Naive thymus-derived CD8-positive, alpha-beta T cell (primary cell): ENCODE measurements at regions of chr1 and their contacts with region 1.

Region 1: GRCh38 chr1:113940365-113941244 is 11.5 kb downstream of the HIPK1 start:
- DNase-seq: peak in 9 of 10 donors; percentile 13 to 68 (median 62)
- ATAC-seq: peak; percentile 70 to 74
- H3K4me3 Mint-ChIP-seq: peak overlapping the region; percentile 74 to 92 (median 84)
- H3K27ac Mint-ChIP-seq: peak overlapping the region; percentile 91 to 98 (median 96)
- H3K4me1 Mint-ChIP-seq: peaks cover 43 to 86% (median 77%) of the 10 kb centered on the region in 4 donors
- H3K27me3 Mint-ChIP-seq: no peaks in the 10 kb centered on the region

Region 2: DNA sequence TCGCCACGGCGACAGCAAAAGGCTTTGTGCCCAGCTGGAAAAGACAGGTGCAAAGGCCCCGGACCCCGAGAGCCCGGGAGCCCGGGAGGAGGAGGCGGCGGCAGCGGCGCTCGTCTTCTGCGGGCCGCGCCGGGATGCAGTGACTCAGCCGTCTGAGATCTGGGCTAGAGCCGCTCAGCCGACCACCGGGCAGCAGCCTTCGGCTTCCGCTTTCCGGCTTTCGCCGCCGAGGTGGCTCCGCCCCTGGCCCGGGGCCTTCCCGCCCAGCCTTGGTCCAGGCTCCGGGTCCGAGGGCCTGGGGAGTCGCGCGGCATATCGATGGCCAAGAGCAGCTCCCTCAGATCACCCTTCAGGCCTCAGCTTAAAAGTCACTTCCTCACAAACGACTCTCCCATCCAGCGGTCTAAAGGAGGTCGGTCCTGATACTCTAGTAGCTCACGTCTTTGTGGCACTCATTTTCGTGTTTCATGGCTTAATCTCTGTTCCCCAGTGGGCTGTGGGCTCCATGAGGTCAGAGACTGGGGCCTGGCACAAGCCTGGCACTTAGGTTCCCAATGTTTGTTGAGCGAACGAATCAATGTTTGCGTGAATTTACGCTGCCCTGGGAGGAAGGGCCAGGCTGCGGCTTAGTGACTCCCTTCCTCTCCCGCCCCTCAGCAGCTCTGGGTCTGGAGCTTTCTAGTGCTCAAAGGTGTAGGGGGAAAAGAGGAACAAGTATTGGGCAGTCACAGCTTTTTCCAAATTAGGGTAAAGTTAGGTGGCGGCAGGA is 181.1 kb before region 1 on chr1 and contains the start of gene PHTF1:
- POLR2A ChIA-PET with region 1: interaction called, 13 read pairs
- DNase-seq: peak; percentile 3 to 69 (median 36)
- ATAC-seq: peak; percentile 58 to 73
- H3K4me3 Mint-ChIP-seq: peak within 1 kb of the TSS; percentile 87 to 97 (median 94)
- H3K27ac Mint-ChIP-seq: peak within 1 kb of the TSS; percentile 89 to 95 (median 92)
- H3K4me1 Mint-ChIP-seq: peaks cover 5 to 29% (median 16%) of the 10 kb centered on the region in 4 donors
- H3K27me3 Mint-ChIP-seq: no peaks in the 10 kb centered on the region
- polyA plus RNA-seq, gene PHTF1: 1.9 to 4.3 (median 3.1) TPM